HCT116 (cell line): ENCODE measurements at regions of chr6 and their contacts with region 1.

Region 1: DNA sequence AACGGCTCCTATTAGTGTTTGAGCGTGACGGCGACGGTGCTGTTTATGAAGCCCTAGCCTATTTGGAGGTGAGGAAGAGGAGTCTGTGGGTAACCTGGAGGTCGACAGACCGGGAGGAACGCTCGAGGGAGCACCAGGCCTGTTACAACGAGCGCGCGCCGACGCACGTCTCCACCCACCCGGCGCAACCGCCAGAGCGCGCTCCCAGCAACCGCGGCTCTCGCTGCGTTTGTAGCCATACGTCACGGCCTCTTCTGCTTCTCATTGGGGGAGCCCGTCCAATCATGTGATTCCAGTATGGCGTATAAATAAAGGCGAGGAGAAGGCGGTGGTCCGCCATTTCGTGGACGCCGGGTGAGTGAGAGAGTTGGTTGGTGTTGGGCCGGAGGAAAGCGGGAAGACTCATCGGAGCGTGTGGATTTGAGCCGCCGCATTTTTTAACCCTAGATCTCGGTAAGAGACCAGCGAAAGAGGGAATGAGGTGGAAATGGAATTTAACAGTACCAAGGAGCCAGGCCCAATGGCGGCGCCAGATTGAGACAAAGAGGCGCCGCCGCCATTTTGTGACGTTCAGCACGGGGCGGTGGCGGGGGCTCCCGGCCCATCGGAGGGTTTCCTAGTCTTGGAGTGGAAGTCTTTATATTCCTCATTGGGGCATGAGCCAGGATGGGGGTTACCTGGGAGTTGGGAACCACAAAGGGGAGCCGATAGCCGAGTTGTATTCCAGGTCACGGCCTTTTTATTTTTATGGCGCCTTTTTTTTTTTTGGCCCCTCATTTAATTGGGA is at the start of gene SRSF3:
- DNase-seq: peak; percentile 95
- ATAC-seq: peak; percentile 92
- H3K4me3 ChIP-seq: peak within 1 kb of the TSS; percentile 88
- H3K27ac ChIP-seq: peak within 1 kb of the TSS; percentile 98
- H3K4me1 ChIP-seq: peaks cover 12 to 47% of the 10 kb centered on the region in 2 experiments
- H3K27me3 ChIP-seq: no peaks in the 10 kb centered on the region
- CTCF ChIP-seq: peak in 2 of 3 experiments; percentile 15 to 23; a peak in 1 of 6 replicates
- POLR2A ChIP-seq: peak; percentile 98
- RAD21 ChIP-seq: no peak
- total RNA-seq, gene SRSF3: 362 TPM

Region 2: GRCh38 chr6:36423101-36423824 is 171.0 kb before region 1 on chr6:
- CTCF ChIA-PET with region 1: no interaction called
- POLR2A ChIA-PET with region 1: no interaction called
- RAD21 ChIA-PET with region 1: no interaction called
- intact Hi-C with region 1: loop called (anchors 5 kb)
- DNase-seq: peak; percentile 95
- ATAC-seq: peak; percentile 97
- H3K4me3 ChIP-seq: peak overlapping the region; percentile 33 to 49
- H3K27ac ChIP-seq: no peak overlapping the region
- H3K4me1 ChIP-seq: peaks cover 6 to 26% of the 10 kb centered on the region in 2 experiments; a peak in 3 of 4 replicates
- H3K27me3 ChIP-seq: no peaks in the 10 kb centered on the region
- CTCF ChIP-seq: peak; percentile 58 to 73 (median 61)
- POLR2A ChIP-seq: peak; percentile 63
- RAD21 ChIP-seq: peak; percentile 83

Region 3: DNA sequence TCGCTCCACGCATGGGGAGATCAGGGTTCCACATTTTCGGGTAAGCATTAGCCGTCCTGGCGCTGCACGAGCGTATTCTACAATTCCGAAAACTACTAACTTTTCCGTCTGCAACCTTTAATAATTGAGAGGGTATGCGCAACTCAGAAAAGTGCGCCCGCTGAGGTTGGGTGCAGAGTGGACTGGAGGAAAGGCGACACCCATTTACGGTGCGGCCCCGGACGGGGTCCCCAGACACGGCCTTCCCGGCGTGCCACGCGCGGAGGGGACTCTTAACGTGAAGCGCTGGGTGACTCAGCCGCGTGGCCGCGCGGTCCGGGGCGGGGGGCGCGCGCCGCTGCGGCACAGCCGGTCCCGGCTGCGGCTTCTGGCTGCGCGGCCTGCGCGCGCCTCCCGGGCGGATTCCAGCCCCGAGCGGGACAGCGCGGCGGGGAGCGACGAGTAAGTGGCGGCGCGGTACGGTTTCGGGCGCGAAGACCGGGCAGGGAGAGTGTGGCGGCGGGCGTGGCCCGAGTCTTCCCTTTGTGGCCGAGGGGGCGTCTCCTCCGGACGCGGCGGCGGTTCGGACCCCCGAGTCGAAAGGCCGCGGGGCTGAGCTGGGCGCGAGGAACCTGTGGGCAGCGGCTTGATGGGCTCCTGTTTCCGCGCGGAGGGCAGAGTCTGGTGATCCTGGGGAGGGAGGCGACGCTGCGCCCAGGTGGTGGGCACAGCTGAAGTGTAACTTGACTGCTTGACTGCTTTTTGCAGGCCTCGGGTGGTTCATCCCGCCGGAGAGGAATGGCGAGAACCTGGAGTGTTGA is 151.4 kb before region 1 on chr6 and contains the starts of genes KCTD20 and PXT1:
- CTCF ChIA-PET with region 1: no interaction called
- POLR2A ChIA-PET with region 1: interaction called, 8 read pairs
- RAD21 ChIA-PET with region 1: no interaction called
- intact Hi-C with region 1: loop called (anchors 5 kb)
- DNase-seq: peak; percentile 75
- ATAC-seq: peak; percentile 79
- H3K4me3 ChIP-seq: peak within 1 kb of the TSS; percentile 76 to 84
- H3K27ac ChIP-seq: peak within 1 kb of the TSS; percentile 96
- H3K4me1 ChIP-seq: peaks cover 19 to 32% of the 10 kb centered on the region in 2 experiments
- H3K27me3 ChIP-seq: no peaks in the 10 kb centered on the region
- CTCF ChIP-seq: no peak
- POLR2A ChIP-seq: peak; percentile 57
- RAD21 ChIP-seq: no peak
- total RNA-seq, gene KCTD20: 23.7 TPM
- total RNA-seq, gene PXT1: 0.17 TPM

Region 4: GRCh38 chr6:36605560-36606391 is 11.6 kb after region 1 on chr6:
- CTCF ChIA-PET with region 1: no interaction called
- POLR2A ChIA-PET with region 1: interaction called, 20 read pairs
- RAD21 ChIA-PET with region 1: no interaction called
- intact Hi-C with region 1: no loop called
- DNase-seq: no peak
- ATAC-seq: peak; percentile 47
- H3K4me3 ChIP-seq: no peak overlapping the region
- H3K27ac ChIP-seq: no peak overlapping the region
- H3K4me1 ChIP-seq: peaks cover 9 to 20% of the 10 kb centered on the region in 2 experiments; a peak in 2 of 4 replicates
- H3K27me3 ChIP-seq: no peaks in the 10 kb centered on the region
- CTCF ChIP-seq: peak in 2 of 3 experiments; percentile 19 to 27; a peak in 2 of 6 replicates
- POLR2A ChIP-seq: no peak
- RAD21 ChIP-seq: no peak